Cardiac septum (tissue), 1 donor: ENCODE measurements at regions of chr2 and their contacts with region 1.

Region 1: GRCh38 chr2:167187978-167188967 is 300.0 kb downstream of the XIRP2 start:
- DNase-seq: no peak

Region 2: GRCh38 chr2:166984797-166985196 is 203.5 kb before region 1 on chr2:
- intact Hi-C with region 1: no loop called
- DNase-seq: no peak

Region 3: DNA sequence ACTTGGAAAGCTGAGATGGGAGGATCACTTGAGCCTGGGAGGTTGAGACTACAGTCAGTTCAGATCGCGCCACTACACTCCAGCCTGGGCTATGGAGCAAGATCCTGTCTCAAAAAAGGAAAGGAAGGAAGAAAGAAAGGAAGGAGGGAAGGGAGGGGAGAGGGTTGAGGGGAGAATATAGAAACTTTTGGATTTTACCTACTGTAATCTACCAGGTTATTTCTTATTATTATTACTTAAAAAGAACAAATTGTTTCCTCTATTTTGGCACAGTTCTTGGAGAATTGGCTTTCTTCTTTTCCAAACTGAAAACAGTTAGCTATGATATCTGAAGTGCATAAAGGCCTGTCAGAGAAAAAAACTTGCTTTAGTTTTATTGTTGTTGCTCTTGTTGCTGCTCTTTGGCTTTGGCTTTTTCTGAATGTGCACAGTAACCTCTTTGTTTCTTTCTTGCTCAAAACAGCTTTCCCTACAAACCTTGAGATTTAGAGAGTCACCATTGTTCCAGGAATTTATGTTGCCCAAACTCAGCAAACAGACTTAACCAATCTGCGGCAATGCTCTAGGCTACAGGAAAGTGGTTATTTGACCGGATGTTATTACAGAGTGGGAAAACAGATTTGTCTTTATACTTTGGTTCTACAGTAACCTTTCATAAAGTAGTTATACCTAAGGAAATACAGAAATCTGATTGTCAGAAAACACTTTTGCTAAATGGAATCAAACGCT is 85.1 kb before region 1 on chr2:
- intact Hi-C with region 1: no loop called
- DNase-seq: no peak

Region 4: GRCh38 chr2:167140767-167141166 is 47.5 kb before region 1 on chr2:
- intact Hi-C with region 1: loop called (anchors 2 kb)
- DNase-seq: no peak

Region 5: DNA sequence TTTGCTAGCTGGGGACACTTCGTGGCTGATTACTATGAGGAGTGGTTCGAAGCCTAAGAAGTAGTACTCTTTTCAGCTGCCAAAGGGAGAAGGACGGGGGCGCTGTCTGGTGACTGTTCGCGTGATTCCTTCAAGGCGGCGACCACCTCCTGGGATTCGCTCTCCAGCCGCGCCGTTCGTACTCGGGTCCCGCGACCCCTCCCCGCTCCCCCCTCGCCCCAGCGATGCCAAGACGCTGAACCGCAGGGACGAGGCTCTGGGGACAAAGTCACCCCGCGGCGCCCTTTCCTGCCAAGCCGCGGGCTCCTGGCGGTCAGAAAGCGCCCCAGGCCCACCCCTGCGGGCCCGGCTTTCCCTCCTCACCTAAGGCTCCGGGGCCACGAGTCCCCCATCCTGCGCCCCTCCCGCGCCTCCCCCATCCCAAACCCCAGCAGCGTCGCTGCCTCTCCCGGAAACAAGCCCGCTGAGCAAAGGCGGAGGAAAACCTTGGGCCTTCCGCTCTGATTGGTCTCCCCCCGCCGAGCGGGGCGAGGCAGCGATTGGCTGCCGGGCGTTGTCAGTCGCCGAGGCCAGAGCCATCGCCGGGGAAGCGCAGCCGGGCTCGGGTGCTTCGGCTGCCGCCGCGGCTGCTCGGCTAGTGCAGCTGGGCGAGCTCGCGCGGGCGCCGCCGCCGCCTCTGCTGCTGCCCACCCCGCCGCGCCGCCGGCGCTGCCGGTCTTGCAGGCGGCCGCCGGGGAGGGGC is 104.3 kb after region 1 on chr2:
- intact Hi-C with region 1: no loop called
- DNase-seq: peak; percentile 92